ENCODE measurements at regions of chr1 and their contacts with region 1.

Region 1: DNA sequence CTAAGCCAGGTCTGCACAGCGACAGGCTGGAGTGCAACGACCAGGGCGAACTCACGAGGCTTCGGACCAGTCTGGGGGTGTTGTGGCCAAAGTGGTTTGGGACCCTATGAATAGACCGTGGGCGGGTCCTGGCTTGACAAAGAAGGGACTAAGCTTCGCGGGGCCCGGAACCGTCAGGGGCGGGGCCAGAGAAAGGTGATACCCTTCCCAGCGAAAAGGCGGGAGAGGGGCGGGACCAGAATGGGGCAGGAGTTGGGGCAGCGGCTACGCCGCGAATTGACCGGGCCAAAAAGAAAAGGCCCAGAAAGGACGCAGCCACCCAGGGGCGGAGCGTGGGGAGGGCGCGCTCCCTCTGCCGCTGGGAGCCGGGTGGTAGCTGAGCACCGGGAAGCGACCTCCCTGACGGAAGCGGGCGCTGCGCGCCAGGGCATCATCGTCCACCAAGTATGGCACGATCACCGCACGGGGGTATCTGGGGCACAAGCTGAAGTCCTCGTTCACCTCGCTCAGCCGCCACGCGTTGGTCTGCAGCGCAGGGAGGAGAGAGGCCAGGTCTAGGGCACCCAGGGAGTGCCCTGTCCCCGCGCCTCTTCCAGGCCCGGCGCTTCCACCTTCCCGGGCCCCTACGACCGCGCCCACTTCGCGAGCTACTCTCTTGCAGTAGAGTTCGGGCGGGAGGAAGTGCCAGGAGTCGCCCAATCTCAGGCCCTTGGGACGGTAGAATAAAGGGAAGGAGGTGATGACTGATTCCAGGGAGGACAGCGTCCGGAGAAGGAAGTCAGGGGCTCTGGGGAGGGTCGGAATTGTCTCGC is 6.7 kb upstream of the FAM167B start:
- H3K4me3 Mint-ChIP-seq: peak overlapping the region; percentile 74
- H3K27ac Mint-ChIP-seq: peak overlapping the region; percentile 71
- H3K4me1 Mint-ChIP-seq: peaks cover 28% of the 10 kb centered on the region
- H3K27me3 Mint-ChIP-seq: peaks cover 33% of the 10 kb centered on the region

Region 2: DNA sequence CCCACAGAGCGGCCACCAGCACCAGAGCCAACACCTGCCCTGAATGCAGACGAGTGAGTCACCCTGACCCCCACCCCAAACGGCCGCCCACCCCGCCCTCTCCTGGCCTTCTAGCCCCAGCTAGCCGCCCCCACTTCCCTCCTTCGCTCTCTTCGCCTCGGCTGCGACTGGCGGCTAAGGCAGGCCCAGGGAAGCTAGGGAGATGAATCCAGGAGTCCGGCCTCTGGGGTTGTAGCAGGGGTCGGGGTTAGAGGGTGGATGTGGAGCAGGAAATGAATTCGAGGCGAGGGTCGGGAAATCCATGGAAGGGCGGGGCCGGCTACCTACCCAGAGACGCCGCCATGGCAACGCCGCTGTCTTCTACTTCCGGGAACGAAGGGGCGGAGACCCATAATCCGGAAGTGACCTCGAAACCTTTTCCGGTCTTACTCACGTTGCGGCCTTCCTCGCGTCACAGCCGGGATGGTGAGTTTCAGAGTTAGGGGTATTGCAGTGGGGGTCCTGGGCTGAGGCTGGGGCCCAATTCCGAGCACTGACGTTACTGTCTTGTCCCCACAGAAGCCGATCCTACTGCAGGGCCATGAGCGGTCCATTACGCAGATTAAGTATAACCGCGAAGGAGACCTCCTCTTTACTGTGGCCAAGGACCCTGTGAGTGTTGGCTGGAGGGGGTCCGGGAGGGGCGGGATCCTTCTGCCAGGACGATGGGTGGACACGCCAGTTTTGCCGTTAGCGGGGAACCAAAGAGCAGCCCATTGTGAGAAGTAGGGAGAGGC is 18.2 kb before region 1 on chr1 and contains the starts of genes EIF3I and TMEM234:
- intact Hi-C with region 1: loop called (anchors 2 kb)
- H3K4me3 Mint-ChIP-seq: peak within 1 kb of the TSS; percentile 96
- H3K27ac Mint-ChIP-seq: peak within 1 kb of the TSS; percentile 95
- H3K4me1 Mint-ChIP-seq: peaks cover 39% of the 10 kb centered on the region
- H3K27me3 Mint-ChIP-seq: no peaks in the 10 kb centered on the region

Measured in dendritic cell treated with granulocyte-macrophage colony-stimulating factor and Interleukin-4, amounts not matched to agents 40 ng/mL and 50 ng/mL, for 4 days (primary cell).